Gastrocnemius medialis (tissue), 4 donors: ENCODE measurements at regions of chr3 and their contacts with region 1.

Region 1: GRCh38 chr3:179562591-179563270 is at the start of gene ACTL6A:
- DNase-seq: peak; percentile 100
- ATAC-seq: peak; percentile 95 to 98
- H3K4me3 ChIP-seq: peak within 1 kb of the TSS; percentile 75 to 97 (median 86)
- H3K27ac ChIP-seq: peak within 1 kb of the TSS; percentile 86 to 92 (median 88)
- H3K4me1 ChIP-seq: peaks cover 8 to 12% of the 10 kb centered on the region in 2 donors
- H3K27me3 ChIP-seq: no peaks in the 10 kb centered on the region
- CTCF ChIP-seq: no peak
- POLR2A ChIP-seq: peak; percentile 59 to 79
- total RNA-seq, gene ACTL6A: 12.1 to 27.8 (median 21.0) TPM

Region 2: DNA sequence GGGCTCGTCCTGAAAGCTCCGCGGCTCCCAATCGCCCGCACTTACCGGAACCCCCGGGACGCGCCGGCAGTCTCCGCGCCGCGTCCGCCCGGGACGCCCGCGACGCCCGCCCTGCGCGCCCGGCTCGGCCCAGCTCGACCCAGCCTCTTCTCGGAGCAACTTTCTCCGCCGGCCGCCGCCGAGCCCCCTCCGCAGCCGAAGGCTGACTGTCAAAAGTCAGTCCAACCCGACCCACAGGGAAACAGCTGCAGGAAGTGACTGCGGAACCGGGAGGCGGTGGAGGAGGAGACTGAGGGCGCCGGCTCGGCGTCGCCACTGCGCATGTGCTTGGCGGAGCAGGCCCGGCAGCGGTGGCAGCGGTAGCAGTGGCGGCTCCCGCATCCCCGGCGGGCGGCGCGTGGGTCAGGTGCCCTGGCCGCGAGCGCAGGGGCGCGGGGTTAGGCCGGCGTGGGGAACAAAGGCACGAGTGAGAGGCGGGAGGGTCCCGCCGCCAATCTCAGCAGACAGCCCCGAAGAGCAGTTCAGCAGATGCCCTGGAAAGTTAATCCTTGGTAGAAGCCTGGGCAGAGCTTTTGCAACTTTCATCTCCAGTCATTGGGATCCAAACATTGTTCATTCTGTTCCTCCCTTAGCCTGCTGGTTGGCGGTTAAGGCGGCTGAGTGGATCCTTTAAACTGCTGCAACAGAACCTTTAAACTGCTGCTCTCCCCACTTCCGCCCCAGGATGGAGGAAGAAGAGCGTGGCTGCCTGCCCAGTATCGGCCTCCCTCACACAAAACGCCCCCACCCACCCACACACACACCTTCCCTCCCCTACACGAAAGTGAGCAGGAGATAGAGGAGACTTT is 491.0 kb before region 1 on chr3 and contains the start of gene ZMAT3:
- in situ Hi-C with region 1: no loop called
- intact Hi-C with region 1: loop called (anchors 5 kb)
- DNase-seq: peak; percentile 73 to 79
- ATAC-seq: peak; percentile 92 to 95
- H3K4me3 ChIP-seq: peak within 1 kb of the TSS; percentile 63 to 82 (median 70)
- H3K27ac ChIP-seq: peak within 1 kb of the TSS; percentile 76 to 92 (median 84)
- H3K4me1 ChIP-seq: peaks cover 5 to 6% of the 10 kb centered on the region in 2 donors
- H3K27me3 ChIP-seq: no peaks in the 10 kb centered on the region
- CTCF ChIP-seq: no peak
- POLR2A ChIP-seq: peak; percentile 66 to 70
- total RNA-seq, gene ZMAT3: 3.8 to 9.7 (median 7.3) TPM

Region 3: GRCh38 chr3:179309225-179310078 is 253.3 kb before region 1 on chr3:
- in situ Hi-C with region 1: no loop called
- intact Hi-C with region 1: no loop called
- DNase-seq: no peak
- ATAC-seq: no peak
- H3K4me3 ChIP-seq: no peak overlapping the region
- H3K27ac ChIP-seq: no peak overlapping the region
- H3K4me1 ChIP-seq: no peaks in the 10 kb centered on the region
- H3K27me3 ChIP-seq: no peaks in the 10 kb centered on the region
- CTCF ChIP-seq: no peak
- POLR2A ChIP-seq: no peak

Region 4: DNA sequence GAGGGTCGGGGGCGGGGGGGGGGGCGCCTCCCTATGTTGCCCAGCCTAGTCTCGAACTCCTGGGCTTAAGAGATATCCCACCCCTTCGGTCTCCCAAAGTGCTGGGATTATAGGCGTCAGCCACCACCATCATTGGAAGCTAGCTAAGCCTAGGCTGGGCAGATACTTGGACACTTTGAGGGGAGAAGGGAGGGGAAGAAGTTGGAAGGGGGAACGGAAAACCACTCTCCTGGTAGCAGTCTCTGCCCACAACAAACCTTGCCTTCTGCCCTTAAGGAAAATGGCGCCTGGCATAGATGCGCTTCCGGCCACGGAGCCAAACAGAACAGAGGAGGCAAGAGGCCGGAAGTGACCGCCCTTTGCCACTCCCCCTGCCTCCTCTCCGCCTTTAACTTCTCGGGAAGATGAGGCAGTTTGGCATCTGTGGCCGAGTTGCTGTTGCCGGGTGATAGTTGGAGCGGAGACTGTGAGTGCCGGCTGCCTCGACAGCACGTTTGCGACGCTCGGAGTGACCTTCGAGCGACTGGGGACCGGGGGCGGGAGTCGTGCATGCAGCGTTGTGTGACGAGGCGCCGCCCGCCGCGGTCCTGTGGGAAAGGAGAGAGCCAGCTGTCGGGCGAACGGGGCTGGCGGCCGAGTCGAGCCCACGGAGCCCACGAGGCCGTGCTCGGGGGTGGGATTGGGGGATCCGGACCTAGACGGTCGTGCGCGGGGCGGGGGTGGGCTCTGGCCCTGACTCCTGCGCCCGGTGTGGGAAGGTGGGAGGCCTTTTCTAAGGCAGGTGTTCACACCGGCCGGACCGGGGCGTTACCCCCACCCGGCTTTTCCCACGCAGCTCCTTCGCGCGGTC is 215.2 kb before region 1 on chr3 and contains the start of gene MFN1:
- in situ Hi-C with region 1: loop called in 2 of 4 experiments (anchors 10 to 25 kb)
- intact Hi-C with region 1: loop called (anchors 5 kb)
- DNase-seq: peak; percentile 91 to 95
- ATAC-seq: peak; percentile 99 to 100
- H3K4me3 ChIP-seq: peak within 1 kb of the TSS; percentile 90 to 93 (median 91)
- H3K27ac ChIP-seq: peak within 1 kb of the TSS; percentile 84 to 90 (median 89)
- H3K4me1 ChIP-seq: peaks cover 6 to 7% of the 10 kb centered on the region in 2 donors
- H3K27me3 ChIP-seq: no peaks in the 10 kb centered on the region
- CTCF ChIP-seq: no peak
- POLR2A ChIP-seq: peak; percentile 60 to 86
- total RNA-seq, gene MFN1: 27.2 to 37.1 (median 32.9) TPM

Region 5: GRCh38 chr3:179451265-179452175 is 111.2 kb before region 1 on chr3 and contains the start of gene GNB4:
- in situ Hi-C with region 1: no loop called
- intact Hi-C with region 1: loop called (anchors 1 kb)
- DNase-seq: peak; percentile 43 to 53
- ATAC-seq: peak; percentile 82 to 84
- H3K4me3 ChIP-seq: peak within 1 kb of the TSS; percentile 58 to 68 (median 63)
- H3K27ac ChIP-seq: peak within 1 kb of the TSS; percentile 61 to 80 (median 74)
- H3K4me1 ChIP-seq: peaks cover 0 to 19% of the 10 kb centered on the region in 2 donors
- H3K27me3 ChIP-seq: peaks cover 0 to 30% (median 6%) of the 10 kb centered on the region in 3 donors
- CTCF ChIP-seq: no peak
- POLR2A ChIP-seq: peak in 1 of 2 donors; percentile 54
- total RNA-seq, gene GNB4: 3.4 to 4.9 (median 3.7) TPM

Region 6: DNA sequence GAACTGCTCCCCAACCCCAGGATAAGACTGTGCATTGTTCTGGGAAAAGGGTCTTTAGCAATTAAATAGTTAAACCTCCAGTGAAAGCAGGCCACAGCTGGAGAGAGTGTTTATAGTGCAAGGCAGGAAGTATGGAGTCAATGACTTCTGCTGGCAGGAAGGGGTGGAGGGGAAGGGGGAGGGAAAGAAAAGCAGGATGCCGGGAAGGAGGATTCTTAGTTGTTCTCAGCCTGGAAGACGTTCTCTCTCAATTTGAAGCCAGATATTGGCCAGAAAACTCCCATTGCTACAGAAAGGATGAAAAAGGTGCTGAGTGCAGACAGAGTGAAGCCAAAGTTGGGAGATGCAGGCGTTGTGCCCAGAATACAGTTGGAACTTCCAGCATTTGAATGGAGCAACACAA is 35.7 kb before region 1 on chr3:
- in situ Hi-C with region 1: no loop called
- intact Hi-C with region 1: no loop called
- DNase-seq: peak; percentile 5 to 27
- ATAC-seq: peak; percentile 47 to 58
- H3K4me3 ChIP-seq: no peak overlapping the region
- H3K27ac ChIP-seq: peak overlapping the region in 3 of 4 donors; percentile 13 to 41 (median 38)
- H3K4me1 ChIP-seq: peaks cover 4 to 8% of the 10 kb centered on the region in 2 donors
- H3K27me3 ChIP-seq: no peaks in the 10 kb centered on the region
- CTCF ChIP-seq: no peak
- POLR2A ChIP-seq: no peak